Calu3 (cell line): ENCODE measurements at regions of chr7 and their contacts with region 1.

Region 1: GRCh38 chr7:20865684-20866083 is 79.0 kb upstream of the SP8 start:
- DNase-seq: no peak
- H3K4me3 Mint-ChIP-seq: no peak overlapping the region
- H3K27ac Mint-ChIP-seq: no peak overlapping the region
- H3K4me1 Mint-ChIP-seq: no peaks in the 10 kb centered on the region
- H3K27me3 Mint-ChIP-seq: peaks cover 62% of the 10 kb centered on the region
- CTCF ChIP-seq: no peak

Region 2: DNA sequence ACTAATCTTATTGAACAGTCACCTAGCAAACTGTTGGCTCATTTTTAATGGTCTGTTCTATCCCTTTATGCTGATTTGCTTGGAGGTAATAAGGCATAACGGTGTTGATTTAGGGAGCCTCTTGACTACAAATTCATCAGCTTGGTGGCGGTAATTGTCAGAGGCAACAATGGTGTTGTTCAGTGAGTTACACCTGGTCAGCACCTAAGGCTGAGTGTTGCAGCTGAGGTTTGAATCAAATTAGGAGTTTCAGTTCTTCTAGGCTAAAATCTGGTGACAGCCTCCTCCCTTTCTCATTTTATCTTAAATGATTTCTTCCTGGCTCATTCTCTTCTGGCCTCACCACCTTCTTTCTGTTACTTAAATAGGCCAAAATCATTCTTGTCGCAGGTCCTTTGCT is 36.7 kb before region 1 on chr7:
- CTCF ChIA-PET with region 1: no interaction called
- intact Hi-C with region 1: no loop called
- DNase-seq: no peak
- H3K4me3 Mint-ChIP-seq: no peak overlapping the region
- H3K27ac Mint-ChIP-seq: no peak overlapping the region
- H3K4me1 Mint-ChIP-seq: no peaks in the 10 kb centered on the region
- H3K27me3 Mint-ChIP-seq: peaks cover 88% of the 10 kb centered on the region
- CTCF ChIP-seq: no peak

Region 3: DNA sequence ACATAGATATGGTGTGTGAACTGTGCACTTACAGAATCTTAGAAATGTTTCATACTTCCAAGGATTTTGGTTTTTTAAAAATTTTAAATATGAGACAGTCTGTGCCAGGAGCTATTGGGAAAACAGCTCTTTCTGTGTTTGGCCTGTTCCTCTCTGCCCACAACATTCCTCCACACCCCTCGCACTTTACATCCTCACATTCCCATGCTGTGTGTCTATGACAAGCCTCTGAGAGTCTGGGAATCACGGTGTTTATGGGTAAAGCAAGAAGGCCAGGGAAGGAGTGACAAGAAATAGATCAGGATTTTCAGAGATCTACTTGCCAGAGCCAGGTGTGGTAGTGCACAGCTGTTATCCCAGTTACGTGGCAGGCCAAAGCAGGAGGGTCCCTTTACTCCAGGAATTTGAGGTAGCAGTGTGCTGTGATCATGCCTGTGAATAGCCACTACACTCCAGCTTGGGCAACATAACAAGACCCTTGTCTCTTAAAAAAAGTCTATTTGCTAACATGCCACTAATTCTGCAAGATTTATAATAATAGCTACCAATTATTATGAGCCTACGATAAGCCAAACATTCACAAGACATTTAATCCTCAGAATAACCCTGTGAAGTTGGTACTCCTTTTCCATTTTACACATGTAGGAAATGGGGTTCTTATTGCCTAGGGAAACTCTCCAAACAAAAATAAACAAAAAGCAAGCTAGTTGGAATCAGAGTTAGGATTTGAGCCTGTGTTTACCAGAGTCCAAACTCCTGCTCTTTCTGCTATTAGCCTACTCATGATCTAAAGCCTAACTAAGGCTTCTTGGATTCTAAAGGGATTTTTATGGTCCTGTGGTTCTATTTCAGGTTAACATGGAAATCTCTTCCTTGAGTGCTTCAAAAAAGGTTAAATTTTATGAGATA is 89.3 kb after region 1 on chr7:
- CTCF ChIA-PET with region 1: no interaction called
- intact Hi-C with region 1: loop called (anchors 5 kb)
- DNase-seq: no peak
- H3K4me3 Mint-ChIP-seq: no peak overlapping the region
- H3K27ac Mint-ChIP-seq: no peak overlapping the region
- H3K4me1 Mint-ChIP-seq: peaks cover 15% of the 10 kb centered on the region
- H3K27me3 Mint-ChIP-seq: no peaks in the 10 kb centered on the region
- CTCF ChIP-seq: no peak